Transverse colon (tissue), 4 donors: ENCODE measurements at regions of chr21 and their contacts with region 1.

Region 1: DNA sequence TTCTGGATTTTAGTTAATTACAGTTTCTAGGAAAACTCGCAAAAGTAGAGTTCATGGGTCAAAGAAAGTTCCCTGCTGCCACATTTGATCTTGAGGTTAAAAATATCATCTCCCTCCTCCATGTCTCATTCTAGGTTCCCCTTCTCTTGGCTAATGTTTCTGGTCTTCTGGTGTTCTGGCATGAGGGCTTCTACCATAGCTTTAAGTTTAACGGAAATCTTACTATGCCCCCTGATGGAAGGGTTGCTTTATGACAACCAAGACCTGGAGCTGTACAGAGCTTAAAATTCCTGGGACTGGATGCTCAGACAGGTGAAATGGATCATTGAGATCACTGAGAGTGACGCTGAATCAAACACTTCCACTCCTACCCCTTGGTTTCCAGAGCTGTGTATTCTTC is 1881.7 kb downstream of the MRPL39 start:
- DNase-seq: no peak
- H3K4me3 ChIP-seq: no peak overlapping the region
- H3K27ac ChIP-seq: no peak overlapping the region
- H3K4me1 ChIP-seq: no peaks in the 10 kb centered on the region
- H3K27me3 ChIP-seq: no peaks in the 10 kb centered on the region
- CTCF ChIP-seq: no peak
- EP300 ChIP-seq: no peak
- POLR2A ChIP-seq: no peak

Region 2: DNA sequence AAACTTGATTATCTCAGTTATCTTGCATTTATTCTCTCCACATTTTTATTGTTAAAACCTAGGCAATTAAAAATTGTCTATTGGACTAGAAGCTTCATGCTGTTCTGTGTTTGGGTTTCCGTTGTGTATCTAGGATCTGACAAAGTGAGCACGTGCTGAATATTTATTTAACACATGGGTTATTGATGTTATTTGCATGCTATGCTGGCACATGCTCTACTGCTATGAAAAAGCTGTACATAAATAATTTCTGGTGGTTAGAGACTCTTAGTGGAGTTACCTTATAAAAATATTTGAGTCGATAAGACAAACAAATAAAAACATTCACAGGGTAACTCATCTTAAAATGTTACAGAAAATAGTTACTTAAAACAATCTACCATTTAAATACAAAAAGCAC is 112.0 kb after region 1 on chr21:
- in situ Hi-C with region 1: loop called in 1 of 4 experiments (anchors 25 kb)
- intact Hi-C with region 1: no loop called
- DNase-seq: no peak
- H3K4me3 ChIP-seq: no peak overlapping the region
- H3K27ac ChIP-seq: no peak overlapping the region
- H3K4me1 ChIP-seq: no peaks in the 10 kb centered on the region
- H3K27me3 ChIP-seq: no peaks in the 10 kb centered on the region
- CTCF ChIP-seq: no peak
- EP300 ChIP-seq: no peak
- POLR2A ChIP-seq: no peak